Dendritic cell treated with granulocyte-macrophage colony-stimulating factor and Interleukin-4, amounts not matched to agents 40 ng/mL and 50 ng/mL, for 4 days (primary cell): ENCODE measurements at regions of chr1 and their contacts with region 1.

Region 1: DNA sequence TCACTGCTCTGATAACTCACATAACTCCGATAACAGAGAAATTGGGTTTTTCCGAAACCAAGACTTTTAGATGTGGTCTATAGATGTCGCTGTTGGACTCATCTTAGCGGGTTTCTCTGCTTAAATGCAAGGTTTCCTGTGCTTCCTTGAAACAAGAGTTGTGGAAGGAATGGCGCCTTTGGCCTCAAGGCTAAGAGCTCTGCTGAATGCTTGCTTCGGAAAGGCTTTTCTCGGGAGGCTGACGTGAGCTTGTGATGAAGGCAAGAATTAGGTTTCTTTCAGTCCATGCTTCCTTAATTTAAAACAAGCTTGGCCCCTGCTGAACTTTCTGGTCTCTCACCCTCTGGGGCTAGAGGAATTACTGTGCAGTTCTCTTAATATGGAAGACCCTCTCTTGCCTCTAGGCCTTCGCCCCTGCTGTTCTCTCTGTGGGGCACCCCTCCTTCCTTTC is 113.5 kb downstream of the MAP3K21 start:
- H3K4me3 Mint-ChIP-seq: no peak overlapping the region
- H3K27ac Mint-ChIP-seq: no peak overlapping the region
- H3K4me1 Mint-ChIP-seq: no peaks in the 10 kb centered on the region
- H3K27me3 Mint-ChIP-seq: peaks cover 5% of the 10 kb centered on the region

Region 2: DNA sequence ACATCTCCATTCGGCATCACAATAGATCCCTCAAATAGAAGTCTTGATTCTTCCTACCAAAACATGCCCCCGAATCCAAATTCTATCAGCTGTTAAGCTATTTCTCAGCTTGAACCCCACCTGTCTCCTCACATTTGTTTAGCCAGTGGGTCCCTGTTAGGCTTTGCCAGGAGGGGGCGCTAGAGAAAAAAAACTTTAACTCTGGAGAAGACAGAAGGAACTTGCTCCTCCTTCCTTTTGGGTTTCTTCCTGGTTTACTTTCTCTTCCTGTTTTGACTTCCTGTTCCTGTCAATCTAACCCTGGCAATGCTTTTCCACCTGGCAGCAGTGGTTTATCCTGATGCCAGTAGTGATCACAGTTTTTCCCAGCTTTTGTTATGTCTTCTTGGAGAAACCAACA is 77.4 kb after region 1 on chr1:
- intact Hi-C with region 1: loop called (anchors 5 kb)
- H3K4me3 Mint-ChIP-seq: no peak overlapping the region
- H3K27ac Mint-ChIP-seq: peak overlapping the region; percentile 41
- H3K4me1 Mint-ChIP-seq: peaks cover 26% of the 10 kb centered on the region
- H3K27me3 Mint-ChIP-seq: peaks cover 3% of the 10 kb centered on the region

Region 3: DNA sequence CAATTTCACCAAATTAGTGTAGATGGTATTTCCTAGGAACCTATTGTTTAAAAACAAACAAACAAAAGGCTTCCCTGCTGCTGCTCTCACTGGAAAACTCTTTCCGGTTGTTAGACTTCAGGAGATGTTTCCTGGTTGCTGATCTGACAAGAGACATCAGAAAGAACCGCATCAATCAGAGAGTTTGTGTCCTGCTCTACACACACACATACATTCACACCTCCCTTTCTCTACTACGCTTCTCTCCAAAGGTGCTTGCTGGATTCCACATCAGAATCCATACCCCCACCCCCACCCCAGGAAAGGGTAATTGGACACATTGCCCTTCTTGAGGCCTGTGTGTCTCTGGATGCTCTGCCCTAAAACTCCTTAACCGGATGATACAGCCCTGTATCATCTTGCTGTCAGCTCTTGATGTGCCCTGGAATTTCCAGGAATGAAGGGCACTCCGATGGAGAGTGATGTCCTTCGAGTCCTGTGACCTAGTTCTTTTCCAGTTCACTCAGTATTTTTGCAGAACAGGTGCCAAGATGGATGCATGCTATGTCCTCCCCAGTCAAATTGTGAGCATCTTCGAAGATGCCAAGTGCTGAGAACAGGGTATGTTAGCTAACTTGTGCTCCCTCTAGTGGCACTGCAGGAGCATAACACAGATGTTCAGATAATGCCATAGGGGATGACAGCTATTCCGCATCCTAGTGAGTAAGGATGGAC is 349.8 kb after region 1 on chr1:
- intact Hi-C with region 1: loop called (anchors 1 kb)
- H3K4me3 Mint-ChIP-seq: no peak overlapping the region
- H3K27ac Mint-ChIP-seq: no peak overlapping the region
- H3K4me1 Mint-ChIP-seq: no peaks in the 10 kb centered on the region
- H3K27me3 Mint-ChIP-seq: peaks cover 8% of the 10 kb centered on the region

Region 4: DNA sequence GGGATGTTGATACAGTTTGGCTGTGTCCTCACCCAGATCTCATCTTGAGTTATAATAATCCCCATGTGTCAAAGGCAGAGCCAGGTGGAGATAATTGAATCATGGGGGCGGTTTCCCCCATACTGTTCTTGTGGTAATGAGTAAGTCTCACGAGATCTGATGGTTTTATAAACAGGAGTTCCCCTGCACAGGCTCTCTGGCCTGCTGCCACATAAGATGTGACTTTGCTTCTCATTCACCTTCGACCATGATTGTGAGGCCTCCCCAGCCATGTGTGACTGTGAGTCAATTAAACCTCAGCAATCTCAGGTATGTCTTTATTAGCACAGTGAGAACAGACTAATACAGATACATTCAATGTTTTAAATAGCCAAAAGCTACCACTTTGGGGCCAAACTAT is 504.6 kb after region 1 on chr1:
- intact Hi-C with region 1: no loop called
- H3K4me3 Mint-ChIP-seq: no peak overlapping the region
- H3K27ac Mint-ChIP-seq: no peak overlapping the region
- H3K4me1 Mint-ChIP-seq: no peaks in the 10 kb centered on the region
- H3K27me3 Mint-ChIP-seq: no peaks in the 10 kb centered on the region

Region 5: DNA sequence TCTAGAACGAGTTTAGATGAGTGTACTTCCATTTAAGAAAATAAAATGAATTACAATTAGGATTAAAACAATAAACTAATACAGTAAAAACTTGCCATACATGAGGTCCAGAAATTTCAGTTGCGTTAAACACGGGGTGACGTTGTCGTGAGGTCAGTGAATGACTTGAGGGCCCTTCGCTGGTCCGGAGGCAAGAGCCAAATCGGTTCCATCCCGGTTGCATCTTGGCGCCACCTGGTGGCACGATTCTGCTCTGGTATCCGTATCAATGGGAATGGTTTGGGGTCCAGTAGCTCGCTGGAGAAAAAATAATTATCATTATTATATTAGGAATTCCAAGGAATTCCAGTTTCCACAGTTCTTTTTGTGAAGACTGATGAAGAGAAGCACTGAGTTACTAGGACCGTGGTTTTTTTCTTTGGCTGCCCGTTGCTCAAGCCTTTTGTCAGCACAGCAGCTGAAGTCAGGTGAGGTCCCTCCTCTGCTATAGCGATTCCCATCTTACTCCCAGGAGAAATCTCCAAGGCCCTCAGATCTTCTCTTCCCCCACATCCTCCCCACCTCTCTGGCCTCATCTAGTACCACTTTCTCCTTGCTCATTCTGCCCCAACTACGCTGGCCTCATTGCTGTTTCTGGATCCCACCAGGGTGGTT is 624.9 kb after region 1 on chr1:
- intact Hi-C with region 1: loop called (anchors 2 kb)
- H3K4me3 Mint-ChIP-seq: no peak overlapping the region
- H3K27ac Mint-ChIP-seq: no peak overlapping the region
- H3K4me1 Mint-ChIP-seq: no peaks in the 10 kb centered on the region
- H3K27me3 Mint-ChIP-seq: peaks cover 7% of the 10 kb centered on the region